Dorsolateral prefrontal cortex (tissue), 120 donors: ENCODE measurements at regions of chr18 and their contacts with region 1.

Region 1: DNA sequence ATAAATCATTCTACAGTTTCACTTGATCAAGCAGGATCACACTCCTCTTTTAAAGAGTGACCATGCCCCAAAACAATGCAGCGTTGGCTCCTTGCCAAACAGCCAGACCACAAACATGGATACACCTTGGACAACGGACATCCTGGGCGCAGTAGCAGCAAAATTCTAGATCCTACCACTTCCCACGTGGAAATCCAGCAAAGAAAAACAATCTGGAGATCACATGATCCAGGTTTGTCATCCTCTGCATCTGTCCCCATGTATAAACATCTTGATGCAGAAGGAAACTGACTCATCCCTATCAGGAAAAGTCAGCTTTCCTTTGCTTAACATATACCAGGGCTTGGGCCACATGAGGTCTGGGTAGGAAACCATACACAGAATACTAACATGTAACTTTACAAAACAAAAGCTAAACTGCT is 53.1 kb downstream of the ZNF521 start:
- DNase-seq: peak in 1 of 10 donors; percentile 29
- H3K4me3 ChIP-seq: no peak overlapping the region
- H3K27ac ChIP-seq: no peak overlapping the region
- H3K27me3 ChIP-seq: no peaks in the 10 kb centered on the region
- CTCF ChIP-seq: no peak

Region 2: GRCh38 chr18:25076980-25077943 is 221.6 kb before region 1 on chr18:
- intact Hi-C with region 1: no loop called
- DNase-seq: no peak
- H3K4me3 ChIP-seq: no peak overlapping the region
- H3K27ac ChIP-seq: peak overlapping the region in 1 of 59 donors; percentile 69
- H3K27me3 ChIP-seq: no peaks in the 10 kb centered on the region
- CTCF ChIP-seq: no peak

Region 3: DNA sequence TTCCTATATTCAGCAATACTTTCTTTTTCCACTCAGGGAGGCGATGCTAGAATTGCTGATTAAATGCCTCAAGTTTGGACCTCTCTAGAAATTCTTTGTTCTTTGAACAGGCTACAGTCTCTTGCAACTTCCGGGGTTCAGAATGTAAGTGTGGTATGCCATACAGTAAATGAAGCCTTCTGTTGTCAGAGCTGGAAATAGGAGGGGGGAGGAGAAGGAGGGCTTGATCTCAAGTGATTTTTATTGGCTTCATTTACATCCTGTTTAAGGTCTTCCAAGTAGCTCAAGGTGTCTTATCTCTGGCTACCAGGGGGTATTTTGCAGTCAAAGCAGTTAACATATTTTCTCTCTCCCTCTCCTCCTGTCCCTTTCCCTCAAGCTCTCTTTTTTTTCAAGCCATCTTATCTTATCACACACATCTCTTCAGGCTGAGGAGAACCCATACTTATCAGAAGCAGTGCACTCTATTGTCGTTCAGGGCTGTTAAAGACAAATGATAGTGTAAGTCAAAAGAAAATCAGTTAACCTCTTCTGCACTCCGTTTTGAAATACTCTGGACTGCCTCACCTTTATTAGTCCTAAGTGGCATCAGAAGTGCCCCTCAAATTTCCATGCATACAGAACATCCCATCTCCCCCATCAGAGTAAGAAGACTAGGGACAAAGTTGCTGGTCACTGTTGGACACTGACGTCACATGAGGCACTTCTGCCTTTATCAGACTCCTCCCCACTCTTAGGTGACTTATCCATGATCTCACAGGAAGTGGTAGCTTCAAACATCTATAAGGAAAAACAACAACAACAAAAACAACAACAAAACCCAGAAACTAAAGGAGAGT is 59.1 kb before region 1 on chr18:
- intact Hi-C with region 1: loop called (anchors 10 kb)
- DNase-seq: no peak
- H3K4me3 ChIP-seq: no peak overlapping the region
- H3K27ac ChIP-seq: no peak overlapping the region
- H3K27me3 ChIP-seq: no peaks in the 10 kb centered on the region
- CTCF ChIP-seq: no peak

Region 4: DNA sequence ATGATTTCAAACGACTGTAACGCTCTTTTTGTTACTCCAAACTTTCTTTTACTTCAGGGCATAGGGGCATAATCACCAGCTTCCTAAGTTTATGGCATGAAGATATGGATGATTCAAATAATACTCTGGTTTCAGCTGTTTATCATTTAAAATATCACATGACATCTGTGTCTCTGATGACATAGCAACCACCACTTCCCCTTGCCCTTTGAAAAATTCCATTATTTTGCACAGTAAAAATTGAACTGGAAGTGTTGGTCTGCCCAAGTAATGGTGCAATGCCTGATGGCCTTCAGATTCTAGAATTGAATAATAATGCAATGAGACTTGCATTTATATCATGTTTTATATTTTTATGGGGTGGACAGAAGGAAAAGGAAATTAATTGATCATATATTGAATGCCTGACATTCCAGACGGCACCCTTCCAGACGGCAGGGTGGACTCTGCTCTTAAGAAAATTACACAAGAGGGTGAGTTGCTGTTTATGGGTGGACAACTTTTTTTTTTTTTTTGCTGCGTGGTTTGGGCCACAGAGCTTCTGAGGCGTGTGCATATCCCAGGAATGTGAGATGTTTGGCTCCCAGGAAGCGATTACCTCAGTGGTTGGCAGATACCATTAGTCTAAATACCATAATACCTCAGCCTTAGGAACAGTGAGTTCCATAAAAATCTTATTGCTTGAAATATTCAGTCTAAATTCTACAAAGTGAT is 154.8 kb after region 1 on chr18:
- intact Hi-C with region 1: no loop called
- DNase-seq: no peak
- H3K4me3 ChIP-seq: no peak overlapping the region
- H3K27ac ChIP-seq: no peak overlapping the region
- H3K27me3 ChIP-seq: peaks cover 0 to 3% (median 0%) of the 10 kb centered on the region in 45 donors
- CTCF ChIP-seq: no peak